ENCODE measurements at regions of chr6 and their contacts with region 1.

Region 1: GRCh38 chr6:7312616-7313504 is at the start of gene SSR1:
- DNase-seq: peak; percentile 99
- H3K4me3 ChIP-seq: peak within 1 kb of the TSS; percentile 75 to 98
- H3K27ac ChIP-seq: peak within 1 kb of the TSS; percentile 89 to 97
- H3K4me1 ChIP-seq: peaks cover 0 to 9% of the 10 kb centered on the region in 2 experiments; a peak in 3 of 4 replicates
- H3K27me3 ChIP-seq: no peaks in the 10 kb centered on the region
- CTCF ChIP-seq: no peak
- EP300 ChIP-seq: no peak
- RAD21 ChIP-seq: no peak
- polyA plus RNA-seq, gene SSR1: 50.7 and 60.2 TPM in 2 replicates

Region 2: DNA sequence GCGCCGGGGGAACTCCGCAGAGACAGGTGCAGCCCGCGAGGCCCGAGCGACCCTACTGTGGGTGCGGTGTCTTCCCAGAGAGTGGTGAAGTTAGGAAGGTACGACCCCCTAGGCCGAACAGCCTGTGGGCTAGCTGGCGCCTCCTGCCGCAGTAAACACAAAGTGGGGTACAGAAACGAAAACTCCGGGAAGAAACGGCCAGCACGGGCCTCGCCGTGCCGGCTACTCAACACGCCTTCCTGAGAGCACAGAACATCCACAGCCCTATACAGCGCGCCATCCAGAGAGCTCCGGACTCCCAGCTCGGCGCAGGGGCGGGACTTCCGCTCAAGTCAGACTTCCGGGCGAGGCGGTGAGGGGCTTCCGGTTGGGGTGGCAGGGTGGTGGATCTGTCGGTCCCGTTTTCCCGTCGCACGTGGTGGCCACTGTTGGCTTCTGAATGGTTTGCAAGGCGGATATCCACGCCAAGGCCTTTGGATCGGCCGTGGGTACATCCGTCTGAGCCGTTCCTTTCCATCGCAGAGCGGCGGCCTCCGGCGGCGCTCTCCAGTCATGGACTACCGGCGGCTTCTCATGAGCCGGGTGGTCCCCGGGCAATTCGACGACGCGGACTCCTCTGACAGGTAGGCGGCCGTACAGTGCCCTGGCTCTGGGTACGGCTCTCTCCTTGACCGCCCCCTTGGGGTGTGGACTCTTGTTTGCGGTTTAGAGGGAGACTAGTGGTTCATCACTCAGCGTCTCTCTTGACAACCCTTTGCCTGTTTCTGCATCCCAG is 76.8 kb after region 1 on chr6 and contains the starts of genes CAGE1 and RIOK1:
- CTCF ChIA-PET with region 1: interaction called, 10 read pairs
- POLR2A ChIA-PET with region 1: interaction called, 11 read pairs
- DNase-seq: peak; percentile 94
- H3K4me3 ChIP-seq: peak within 1 kb of the TSS; percentile 82 to 90
- H3K27ac ChIP-seq: peak within 1 kb of the TSS; percentile 77 to 93
- H3K4me1 ChIP-seq: peaks cover 0 to 14% of the 10 kb centered on the region in 2 experiments; a peak in 3 of 4 replicates
- H3K27me3 ChIP-seq: no peaks in the 10 kb centered on the region
- CTCF ChIP-seq: peak; percentile 33
- EP300 ChIP-seq: no peak; a peak in 1 of 4 replicates
- RAD21 ChIP-seq: no peak
- polyA plus RNA-seq, gene CAGE1: 0.05 TPM in 1 of 2 replicates, not detected in the other
- polyA plus RNA-seq, gene RIOK1: 16.3 and 18.7 TPM in 2 replicates

Measured in SK-N-SH (cell line).